Activated T-helper 1 cell treated with anti-CD3 and anti-CD28 coated beads, Interleukin-12 subunit alpha, Interleukin-12 subunit beta, Interleukin-2, Interleukin-4 antibody, amounts not matched to agents 30 ng/mL and 10 ng/mL and 1 ng/mL, durations not matched to agents 14 hours and 24 hours and 36 hours (primary cell): ENCODE measurements at regions of chr9 and their contacts with region 1.

Region 1: GRCh38 chr9:88741335-88741734 is 206.4 kb downstream of the NXNL2 start:
- DNase-seq: no peak
- H3K4me3 Mint-ChIP-seq: no peak overlapping the region
- H3K27ac Mint-ChIP-seq: no peak overlapping the region
- H3K4me1 Mint-ChIP-seq: no peaks in the 10 kb centered on the region
- H3K27me3 Mint-ChIP-seq: peaks cover 7% of the 10 kb centered on the region

Region 2: GRCh38 chr9:87950765-87951488 is 790.4 kb before region 1 on chr9:
- intact Hi-C with region 1: loop called (anchors 2 kb)
- DNase-seq: no peak
- H3K4me3 Mint-ChIP-seq: no peak overlapping the region
- H3K27ac Mint-ChIP-seq: no peak overlapping the region
- H3K4me1 Mint-ChIP-seq: no peaks in the 10 kb centered on the region
- H3K27me3 Mint-ChIP-seq: peaks cover 18% of the 10 kb centered on the region

Region 3: DNA sequence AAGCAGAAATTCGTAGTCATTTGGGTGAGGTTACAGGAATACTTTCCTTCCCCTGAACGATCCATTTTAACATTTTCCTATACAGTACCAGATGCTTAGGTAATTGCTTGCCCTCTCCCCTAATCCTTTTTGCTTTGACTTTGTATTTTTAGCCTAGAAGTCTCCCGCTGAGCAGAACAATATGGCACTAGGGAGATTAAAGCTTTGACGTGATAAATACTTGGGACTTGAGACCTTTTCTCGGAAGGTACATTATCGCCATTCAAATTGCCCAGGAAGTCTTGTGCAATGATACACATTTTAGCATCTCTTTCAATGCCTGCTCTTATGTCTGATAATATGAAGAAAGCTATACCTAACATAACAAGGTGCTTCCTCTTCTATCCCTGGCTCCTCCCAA is 580.2 kb before region 1 on chr9:
- intact Hi-C with region 1: no loop called
- DNase-seq: no peak
- H3K4me3 Mint-ChIP-seq: no peak overlapping the region
- H3K27ac Mint-ChIP-seq: no peak overlapping the region
- H3K4me1 Mint-ChIP-seq: no peaks in the 10 kb centered on the region
- H3K27me3 Mint-ChIP-seq: peaks cover 26% of the 10 kb centered on the region

Region 4: DNA sequence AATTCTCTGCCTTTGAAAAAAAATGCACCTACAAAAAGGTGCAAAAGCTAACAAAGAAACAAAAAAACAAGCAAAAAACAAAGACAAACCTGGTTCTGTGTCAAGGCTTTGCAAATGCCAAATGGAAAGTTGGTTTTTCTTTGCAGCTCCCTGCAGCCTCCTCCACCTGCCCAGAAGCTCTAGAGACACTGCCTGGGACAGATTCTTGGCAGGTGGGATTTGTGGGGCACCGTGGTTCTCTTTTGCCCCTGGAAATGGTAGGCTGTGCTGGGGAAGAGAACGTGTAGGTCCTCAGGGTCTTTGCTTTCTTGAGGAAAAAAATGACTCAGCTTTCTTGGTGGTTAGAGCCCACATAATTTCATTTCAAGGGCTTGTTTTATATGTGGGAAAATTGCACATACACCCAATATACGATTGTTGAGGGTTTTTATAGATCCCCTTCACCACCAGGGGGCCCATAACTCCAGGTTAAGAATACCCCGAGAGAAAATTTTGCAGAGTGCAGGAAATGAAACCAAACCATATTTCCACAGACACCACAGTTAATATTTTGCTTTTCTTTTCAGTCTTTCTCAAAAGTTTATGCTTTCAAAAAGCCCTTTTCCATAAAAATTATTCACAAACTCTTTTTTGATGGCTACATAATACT is 147.7 kb before region 1 on chr9:
- intact Hi-C with region 1: loop called (anchors 1 kb)
- DNase-seq: peak; percentile 19
- H3K4me3 Mint-ChIP-seq: no peak overlapping the region
- H3K27ac Mint-ChIP-seq: no peak overlapping the region
- H3K4me1 Mint-ChIP-seq: peaks cover 8% of the 10 kb centered on the region
- H3K27me3 Mint-ChIP-seq: peaks cover 21% of the 10 kb centered on the region

Region 5: DNA sequence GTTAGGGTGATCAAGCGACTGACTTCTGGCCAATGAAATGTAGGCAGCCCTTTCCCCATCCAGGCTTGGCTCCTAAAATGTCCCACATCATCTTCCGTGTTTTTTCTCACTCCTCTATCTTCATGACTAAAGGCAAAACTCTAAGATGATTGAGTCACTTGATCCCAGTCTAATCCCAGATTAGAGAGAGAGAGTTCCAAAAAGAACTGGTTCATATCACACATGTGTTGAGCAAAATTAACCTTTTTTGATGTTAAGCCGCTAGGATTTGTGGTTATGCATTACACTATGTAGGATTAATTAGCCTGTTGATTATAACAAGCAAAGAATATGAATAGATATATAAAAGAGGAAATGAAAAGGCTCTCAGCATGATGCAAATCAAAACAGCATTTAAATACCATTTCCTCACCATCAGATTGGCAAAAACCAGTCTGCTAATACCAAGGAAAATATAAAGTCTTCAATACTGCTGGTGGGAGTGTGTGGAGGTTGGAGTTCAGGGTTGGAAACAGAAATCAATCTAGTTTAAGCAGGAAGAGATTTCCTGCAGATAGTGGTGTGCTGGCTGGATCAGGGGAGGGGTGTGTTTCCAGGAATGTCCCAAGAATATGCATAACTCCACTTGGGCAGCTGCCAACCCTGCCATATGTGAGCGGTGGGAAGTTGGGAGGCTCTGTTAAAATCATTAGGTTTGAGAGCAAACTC is 62.4 kb after region 1 on chr9:
- intact Hi-C with region 1: no loop called
- DNase-seq: no peak
- H3K4me3 Mint-ChIP-seq: no peak overlapping the region
- H3K27ac Mint-ChIP-seq: no peak overlapping the region
- H3K4me1 Mint-ChIP-seq: no peaks in the 10 kb centered on the region
- H3K27me3 Mint-ChIP-seq: peaks cover 13% of the 10 kb centered on the region